ENCODE measurements at regions of chr3 and their contacts with region 1.

Region 1: GRCh38 chr3:156547637-156548036 is 7.3 kb downstream of the SSR3 start:
- ATAC-seq: peak in 1 of 8 experiments; percentile 75
- H3K4me3 ChIP-seq: no peak overlapping the region
- H3K27ac ChIP-seq: no peak overlapping the region
- H3K4me1 ChIP-seq: no peaks in the 10 kb centered on the region

Region 2: GRCh38 chr3:156664831-156665178 is 117.2 kb after region 1 on chr3:
- in situ Hi-C with region 1: loop called in 3 of 9 experiments (anchors 10 to 25 kb)
- ATAC-seq: no peak
- H3K4me3 ChIP-seq: no peak overlapping the region
- H3K27ac ChIP-seq: no peak overlapping the region
- H3K4me1 ChIP-seq: peaks cover 0 to 6% of the 10 kb centered on the region in 2 donors